IMR-90 (cell line): ENCODE measurements at regions of chr7 and their contacts with region 1.

Region 1: DNA sequence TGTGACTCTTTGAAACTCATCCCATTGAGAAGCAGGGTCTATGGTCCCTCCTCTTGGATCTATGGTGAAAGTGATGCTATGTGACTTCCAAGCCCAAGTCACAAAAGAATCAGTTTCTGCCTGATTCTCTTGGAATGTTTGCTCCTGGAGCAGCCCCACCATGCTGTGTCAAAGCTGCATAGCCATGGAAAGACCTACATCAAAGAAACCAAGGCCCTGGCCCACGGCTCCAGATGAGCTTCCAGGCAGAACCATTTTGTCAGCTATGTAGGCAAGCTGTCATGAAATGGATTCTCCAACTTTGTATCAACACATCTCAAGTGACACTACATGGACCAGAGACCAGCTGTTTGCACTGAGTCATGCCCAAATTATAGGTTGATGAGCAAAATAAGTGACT is 77.0 kb downstream of the AASS start:
- DNase-seq: no peak
- ATAC-seq: no peak
- H3K4me3 ChIP-seq: no peak overlapping the region
- H3K27ac ChIP-seq: no peak overlapping the region
- H3K4me1 ChIP-seq: no peaks in the 10 kb centered on the region
- H3K27me3 ChIP-seq: no peaks in the 10 kb centered on the region
- CTCF ChIP-seq: no peak
- POLR2A ChIP-seq: no peak
- RAD21 ChIP-seq: no peak

Region 2: DNA sequence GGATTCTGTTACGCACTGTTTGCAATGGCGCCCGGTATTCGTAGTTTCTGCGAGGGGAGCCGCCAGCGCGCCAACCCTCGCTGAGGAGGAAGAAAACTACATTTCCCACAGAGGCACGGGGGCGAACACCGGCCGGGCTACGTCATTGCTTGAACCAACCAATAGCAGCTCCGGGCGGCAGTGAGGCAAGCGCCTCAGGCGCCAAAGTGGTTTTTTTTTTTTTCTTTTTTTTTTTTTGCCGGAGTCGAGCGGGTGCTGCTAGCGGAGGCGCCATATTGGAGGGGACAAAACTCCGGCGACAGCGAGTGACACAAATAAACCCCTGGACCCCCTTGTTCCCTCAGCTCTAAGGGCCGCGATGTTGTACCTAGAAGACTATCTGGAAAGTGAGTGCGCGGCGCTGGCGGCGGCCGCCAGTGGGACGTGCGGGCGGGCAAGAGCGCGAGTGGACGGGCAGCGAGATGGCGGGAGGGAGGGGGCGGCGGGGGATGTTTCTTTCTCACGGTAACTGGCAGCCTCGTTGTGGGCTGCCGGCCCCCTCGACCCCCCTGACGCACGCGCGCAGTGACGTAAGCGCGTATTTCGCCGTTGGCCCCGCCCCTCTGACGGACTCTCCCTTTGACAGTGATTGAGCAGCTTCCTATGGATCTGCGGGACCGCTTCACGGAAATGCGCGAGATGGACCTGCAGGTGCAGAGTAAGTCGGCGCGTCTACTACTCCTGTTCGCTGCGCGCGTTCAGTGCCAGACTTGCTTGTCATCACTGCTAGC is 1116.4 kb before region 1 on chr7 and contains the start of gene ING3:
- CTCF ChIA-PET with region 1: no interaction called
- POLR2A ChIA-PET with region 1: interaction called, 12 read pairs
- dilution Hi-C with region 1: no loop called
- in situ Hi-C with region 1: no loop called
- intact Hi-C with region 1: no loop called
- DNase-seq: peak; percentile 97
- ATAC-seq: peak; percentile 97
- H3K4me3 ChIP-seq: peak within 1 kb of the TSS; percentile 89
- H3K27ac ChIP-seq: peak within 1 kb of the TSS; percentile 99
- H3K4me1 ChIP-seq: peaks cover 2% of the 10 kb centered on the region; the same call in 1 of the 2 replicates
- H3K27me3 ChIP-seq: 0 out of 2 replicates have a peak, but pooled peaks cover 2% of the 10 kb centered on the region
- CTCF ChIP-seq: no peak
- POLR2A ChIP-seq: peak; percentile 89
- RAD21 ChIP-seq: no peak
- total RNA-seq, gene ING3: 11.3 and 14.4 TPM in 2 replicates

Region 3: DNA sequence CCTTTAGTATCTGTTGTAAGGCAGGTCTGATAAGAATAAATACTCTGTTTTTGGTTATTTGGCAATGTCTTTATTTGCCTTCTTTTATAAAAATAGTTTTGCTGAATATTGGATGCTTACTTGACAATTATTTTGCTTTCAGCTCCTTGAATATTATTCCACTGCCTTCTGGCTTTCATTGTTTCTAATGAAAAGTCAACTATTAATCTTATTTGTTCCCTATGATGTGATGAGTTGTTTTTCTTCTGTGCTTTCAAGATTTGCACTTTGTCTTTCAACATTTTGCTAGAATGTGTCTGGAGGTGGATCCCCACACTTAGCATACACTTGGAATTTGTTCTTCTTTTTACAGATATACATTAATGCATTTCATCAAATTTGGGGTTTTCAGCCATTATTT is 397.9 kb before region 1 on chr7:
- CTCF ChIA-PET with region 1: no interaction called
- POLR2A ChIA-PET with region 1: no interaction called
- dilution Hi-C with region 1: no loop called
- in situ Hi-C with region 1: no loop called
- intact Hi-C with region 1: no loop called
- DNase-seq: no peak
- ATAC-seq: no peak
- H3K4me3 ChIP-seq: no peak overlapping the region
- H3K27ac ChIP-seq: no peak overlapping the region
- H3K4me1 ChIP-seq: no peaks in the 10 kb centered on the region
- H3K27me3 ChIP-seq: no peaks in the 10 kb centered on the region
- CTCF ChIP-seq: no peak
- POLR2A ChIP-seq: no peak
- RAD21 ChIP-seq: no peak

Region 4: GRCh38 chr7:122038904-122039303 is 28.2 kb before region 1 on chr7:
- CTCF ChIA-PET with region 1: no interaction called
- POLR2A ChIA-PET with region 1: interaction called, 27 read pairs
- dilution Hi-C with region 1: no loop called
- in situ Hi-C with region 1: no loop called
- intact Hi-C with region 1: no loop called
- DNase-seq: peak; percentile 4
- ATAC-seq: no peak
- H3K4me3 ChIP-seq: no peak overlapping the region
- H3K27ac ChIP-seq: no peak overlapping the region
- H3K4me1 ChIP-seq: no peaks in the 10 kb centered on the region
- H3K27me3 ChIP-seq: no peaks in the 10 kb centered on the region
- CTCF ChIP-seq: no peak
- POLR2A ChIP-seq: no peak
- RAD21 ChIP-seq: no peak

Region 5: DNA sequence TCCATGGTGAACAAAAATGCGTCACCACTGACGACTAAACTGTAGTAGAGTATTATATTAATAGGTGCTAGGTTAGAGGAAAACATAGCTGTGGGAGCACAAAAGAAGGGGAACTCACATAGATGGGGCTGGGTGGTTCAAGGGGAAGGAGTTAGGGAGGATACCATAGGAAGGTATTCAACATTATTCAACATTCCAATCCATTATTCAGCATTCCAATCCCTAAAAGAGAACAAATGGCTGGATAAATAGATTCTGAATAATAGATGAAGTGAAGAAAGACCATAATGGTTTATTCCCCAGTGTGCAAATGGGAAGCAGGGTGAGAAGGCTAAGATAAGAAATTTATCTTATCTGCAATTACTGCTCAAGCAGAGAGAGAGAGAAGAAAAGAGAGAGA is 15.6 kb after region 1 on chr7:
- CTCF ChIA-PET with region 1: no interaction called
- POLR2A ChIA-PET with region 1: no interaction called
- dilution Hi-C with region 1: no loop called
- in situ Hi-C with region 1: no loop called
- intact Hi-C with region 1: no loop called
- DNase-seq: no peak
- ATAC-seq: no peak
- H3K4me3 ChIP-seq: no peak overlapping the region
- H3K27ac ChIP-seq: no peak overlapping the region
- H3K4me1 ChIP-seq: no peaks in the 10 kb centered on the region
- H3K27me3 ChIP-seq: no peaks in the 10 kb centered on the region
- CTCF ChIP-seq: no peak
- POLR2A ChIP-seq: no peak
- RAD21 ChIP-seq: no peak